ENCODE measurements at regions of chr12 and their contacts with region 1.

Region 1: GRCh38 chr12:94101738-94102660 is 46.4 kb upstream of the PLXNC1 start:
- DNase-seq: peak; percentile 92
- H3K4me3 Mint-ChIP-seq: peak overlapping the region; percentile 79
- H3K27ac Mint-ChIP-seq: peak overlapping the region; percentile 89
- H3K4me1 Mint-ChIP-seq: peaks cover 52% of the 10 kb centered on the region
- H3K27me3 Mint-ChIP-seq: peaks cover 9% of the 10 kb centered on the region

Region 2: DNA sequence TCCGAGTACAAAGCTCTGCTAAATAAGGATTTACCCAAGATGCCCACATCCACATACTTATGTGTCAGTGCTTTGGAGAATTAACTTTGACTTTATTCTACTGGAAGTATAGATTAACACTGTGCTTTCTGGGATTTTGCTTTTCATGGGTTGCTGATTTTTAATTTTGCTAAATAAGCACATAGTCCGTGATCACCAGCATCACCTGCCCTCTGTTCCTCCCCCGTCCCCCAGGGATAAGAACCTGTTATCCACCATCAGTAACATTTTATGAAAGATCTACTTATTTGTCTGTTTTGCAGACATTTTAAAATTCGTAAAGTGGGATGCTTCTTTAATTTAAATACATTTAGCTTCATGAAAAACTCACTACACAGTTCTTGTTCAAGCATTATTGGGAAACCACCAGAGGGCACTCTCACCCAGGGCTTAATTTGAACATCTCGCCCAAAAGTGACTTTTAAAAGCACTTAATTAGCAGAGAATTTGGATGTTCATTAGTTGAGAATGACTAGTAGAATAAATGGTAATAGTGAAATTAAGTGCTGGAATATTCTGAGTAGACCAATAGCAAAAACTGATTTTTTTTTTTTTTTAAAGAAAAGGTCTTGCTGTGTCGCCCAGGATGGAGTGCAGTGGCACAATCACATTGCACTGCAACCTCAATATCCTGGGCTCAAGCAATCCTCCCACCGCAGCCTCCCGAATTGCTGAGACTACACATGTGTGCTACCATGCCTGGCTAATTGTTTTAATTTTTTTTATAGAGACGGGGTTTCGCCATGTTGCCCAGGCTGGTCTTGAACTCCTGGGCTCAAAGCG is 599.0 kb before region 1 on chr12:
- CTCF ChIA-PET with region 1: interaction called, 158 read pairs
- DNase-seq: peak; percentile 79
- H3K4me3 Mint-ChIP-seq: no peak overlapping the region
- H3K27ac Mint-ChIP-seq: no peak overlapping the region
- H3K4me1 Mint-ChIP-seq: peaks cover 34% of the 10 kb centered on the region
- H3K27me3 Mint-ChIP-seq: no peaks in the 10 kb centered on the region

Region 3: DNA sequence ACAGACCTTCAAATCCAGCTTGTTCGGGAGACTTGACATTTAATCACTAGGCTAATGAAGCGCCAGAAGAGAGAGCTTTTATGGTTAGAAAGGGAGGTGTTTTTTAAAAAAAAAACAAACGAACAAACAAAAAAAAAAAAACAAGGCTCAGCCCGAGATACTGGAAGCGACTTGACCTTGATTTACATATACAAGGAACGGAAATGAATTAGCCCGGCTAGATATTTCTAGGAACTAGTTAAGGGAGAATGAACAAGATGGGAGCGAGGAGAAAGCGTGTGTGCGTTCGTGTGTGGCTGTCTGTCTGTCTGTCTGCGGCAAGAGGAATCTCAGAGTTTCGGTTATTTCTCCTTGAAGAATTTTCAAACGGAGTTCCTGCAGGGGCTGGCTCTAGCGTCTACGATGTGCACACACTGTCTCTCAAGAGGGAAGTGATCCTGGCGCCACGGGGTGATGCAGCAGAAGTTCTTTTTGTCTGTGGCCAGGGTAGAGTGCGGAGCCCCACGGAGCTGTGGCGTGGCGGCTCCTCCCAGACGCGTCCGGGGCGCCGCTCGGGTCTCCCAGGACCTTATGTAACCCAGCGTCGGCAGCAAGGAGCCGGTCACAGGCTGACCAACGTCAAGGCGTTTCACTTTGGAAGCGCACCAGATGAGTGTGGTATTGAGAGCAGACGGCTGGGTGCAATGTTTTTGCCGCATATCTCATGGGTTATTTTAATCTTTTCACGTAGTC is 510.7 kb before region 1 on chr12:
- CTCF ChIA-PET with region 1: interaction called, 14 read pairs
- DNase-seq: peak; percentile 65
- H3K4me3 Mint-ChIP-seq: peak overlapping the region; percentile 90
- H3K27ac Mint-ChIP-seq: peak overlapping the region; percentile 67
- H3K4me1 Mint-ChIP-seq: peaks cover 67% of the 10 kb centered on the region
- H3K27me3 Mint-ChIP-seq: peaks cover 46% of the 10 kb centered on the region

Region 4: GRCh38 chr12:93785262-93786010 is 316.6 kb before region 1 on chr12:
- CTCF ChIA-PET with region 1: interaction called, 15 read pairs
- DNase-seq: peak; percentile 62
- H3K4me3 Mint-ChIP-seq: peak overlapping the region; percentile 17
- H3K27ac Mint-ChIP-seq: peak overlapping the region; percentile 84
- H3K4me1 Mint-ChIP-seq: peaks cover 71% of the 10 kb centered on the region
- H3K27me3 Mint-ChIP-seq: no peaks in the 10 kb centered on the region

Region 5: DNA sequence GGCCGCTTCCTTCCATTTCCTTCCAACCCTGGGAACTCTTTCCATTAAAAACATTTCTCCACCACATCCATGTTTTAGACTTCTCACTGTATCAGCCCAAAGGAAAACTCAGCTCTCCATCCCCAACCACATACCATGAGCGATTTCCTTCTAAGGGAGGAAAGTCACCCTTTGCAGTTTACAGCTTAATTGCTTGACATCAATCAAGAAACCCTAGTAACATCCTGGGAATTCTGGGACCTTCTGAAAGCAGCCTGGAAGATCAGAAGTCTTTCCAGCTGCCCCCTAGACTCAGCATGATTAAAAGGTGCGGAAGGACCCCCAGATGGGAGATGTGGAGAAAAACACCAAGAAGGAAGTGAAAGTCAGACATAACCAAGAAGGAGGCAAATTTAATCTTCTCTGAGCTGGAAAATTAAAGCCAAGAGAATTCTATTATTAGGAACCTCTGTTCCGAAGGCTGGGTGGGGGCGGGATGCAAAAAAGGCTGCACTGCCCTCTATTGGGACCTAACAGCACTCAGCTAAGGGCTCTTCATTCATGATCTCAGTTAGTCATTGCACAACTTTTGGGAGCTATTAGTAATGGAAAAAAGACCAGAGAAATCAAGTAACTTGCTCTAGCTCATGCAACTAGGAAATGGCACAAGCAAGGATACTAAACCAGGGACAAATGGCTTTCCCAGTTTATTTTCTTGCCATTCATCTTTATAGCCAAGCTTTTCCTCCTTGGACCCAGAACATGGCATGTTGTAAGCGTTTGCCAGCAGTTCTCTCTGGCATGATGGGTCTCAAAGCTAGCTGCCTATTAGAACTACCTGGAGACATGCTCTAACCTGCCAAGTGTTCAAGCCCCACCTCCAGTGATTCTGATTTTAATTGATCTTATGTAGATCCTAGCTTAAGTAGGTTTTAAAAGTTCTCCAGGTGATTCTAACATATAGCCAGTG is 26.7 kb before region 1 on chr12:
- CTCF ChIA-PET with region 1: interaction called, 84 read pairs
- DNase-seq: peak; percentile 30
- H3K4me3 Mint-ChIP-seq: no peak overlapping the region
- H3K27ac Mint-ChIP-seq: no peak overlapping the region
- H3K4me1 Mint-ChIP-seq: peaks cover 34% of the 10 kb centered on the region
- H3K27me3 Mint-ChIP-seq: peaks cover 12% of the 10 kb centered on the region

Region 6: GRCh38 chr12:94126067-94126466 is 24.1 kb after region 1 on chr12:
- CTCF ChIA-PET with region 1: interaction called, 25 read pairs
- DNase-seq: no peak
- H3K4me3 Mint-ChIP-seq: peak overlapping the region; percentile 3
- H3K27ac Mint-ChIP-seq: peak overlapping the region; percentile 86
- H3K4me1 Mint-ChIP-seq: peaks cover 62% of the 10 kb centered on the region
- H3K27me3 Mint-ChIP-seq: no peaks in the 10 kb centered on the region

Region 7: DNA sequence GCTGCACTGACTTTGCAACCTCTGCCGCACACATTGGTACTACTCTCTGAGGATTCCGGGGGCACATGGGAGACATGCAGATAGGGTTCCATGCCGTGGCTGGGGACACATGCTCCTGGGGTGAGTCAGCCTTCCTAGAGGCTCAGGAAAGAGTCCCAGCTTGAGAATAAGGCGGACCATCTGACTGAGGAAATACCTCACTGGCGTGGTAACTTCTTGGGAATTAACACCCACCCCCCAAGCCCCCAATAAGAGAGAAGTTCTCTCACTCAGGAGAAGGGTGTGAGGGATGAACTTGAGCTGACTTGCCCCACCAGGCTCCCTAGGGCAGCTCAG is 69.6 kb after region 1 on chr12:
- CTCF ChIA-PET with region 1: no interaction called
- DNase-seq: no peak
- H3K4me3 Mint-ChIP-seq: no peak overlapping the region
- H3K27ac Mint-ChIP-seq: no peak overlapping the region
- H3K4me1 Mint-ChIP-seq: peaks cover 74% of the 10 kb centered on the region
- H3K27me3 Mint-ChIP-seq: no peaks in the 10 kb centered on the region

Region 8: GRCh38 chr12:94204499-94205247 is 102.7 kb after region 1 on chr12:
- CTCF ChIA-PET with region 1: no interaction called
- DNase-seq: peak; percentile 34
- H3K4me3 Mint-ChIP-seq: peak overlapping the region; percentile 14
- H3K27ac Mint-ChIP-seq: peak overlapping the region; percentile 82
- H3K4me1 Mint-ChIP-seq: peaks cover 74% of the 10 kb centered on the region
- H3K27me3 Mint-ChIP-seq: no peaks in the 10 kb centered on the region